ENCODE measurements at regions of chr2 and their contacts with region 1.

Region 1: DNA sequence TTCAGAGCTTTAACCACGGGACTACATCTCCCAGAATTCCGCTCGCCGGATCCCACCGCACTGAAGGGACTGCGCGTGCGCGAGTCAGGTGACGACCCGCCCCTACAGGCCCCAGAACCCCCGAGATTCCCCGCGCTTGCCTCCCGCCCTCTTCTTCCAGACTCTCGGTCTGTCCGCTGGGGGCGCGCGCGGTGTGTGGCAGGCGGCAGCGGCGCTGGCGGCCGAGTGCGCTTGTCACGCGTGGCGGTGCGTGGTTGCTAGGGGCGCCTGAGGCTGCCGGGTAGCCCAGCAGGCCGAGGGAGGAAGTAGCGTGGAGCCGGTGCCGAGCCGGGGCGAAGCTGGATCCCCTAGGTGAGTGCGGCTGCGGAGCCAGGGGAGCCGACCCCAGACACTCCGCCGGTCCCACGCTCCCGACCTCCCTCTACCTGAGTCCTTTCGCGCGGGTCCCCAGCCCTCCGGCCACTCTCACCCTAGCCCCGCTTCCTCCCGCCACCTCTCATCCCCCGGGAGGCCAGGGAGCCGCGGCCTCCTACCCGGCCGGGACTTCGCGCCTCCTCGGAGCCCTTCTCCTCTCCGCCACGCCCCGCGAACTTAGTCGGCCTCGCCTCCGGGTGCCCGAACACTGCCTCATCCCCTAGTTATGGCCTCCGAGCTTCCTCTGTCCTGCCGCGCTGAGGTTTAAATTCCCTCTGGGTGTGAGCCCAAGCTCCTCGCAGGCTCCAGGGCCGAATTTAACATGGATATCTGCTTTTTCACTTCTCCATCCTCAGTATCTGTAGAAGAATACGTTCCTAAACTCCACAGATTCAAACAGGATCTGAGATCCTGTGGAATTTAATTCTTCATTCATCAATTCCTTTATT is at the start of gene TTLL4:
- DNase-seq: peak; percentile 88
- ATAC-seq: peak; percentile 94
- H3K4me3 ChIP-seq: peak within 1 kb of the TSS; percentile 89
- H3K27ac ChIP-seq: peak within 1 kb of the TSS; percentile 77
- H3K4me1 ChIP-seq: peaks cover 7% of the 10 kb centered on the region
- H3K27me3 ChIP-seq: no peaks in the 10 kb centered on the region
- CTCF ChIP-seq: peak; percentile 81 to 95 (median 87)
- EP300 ChIP-seq: no peak
- POLR2A ChIP-seq: peak; percentile 78
- RAD21 ChIP-seq: peak; percentile 81
- polyA plus RNA-seq, gene TTLL4: 16.6 to 18.7 TPM

Region 2: DNA sequence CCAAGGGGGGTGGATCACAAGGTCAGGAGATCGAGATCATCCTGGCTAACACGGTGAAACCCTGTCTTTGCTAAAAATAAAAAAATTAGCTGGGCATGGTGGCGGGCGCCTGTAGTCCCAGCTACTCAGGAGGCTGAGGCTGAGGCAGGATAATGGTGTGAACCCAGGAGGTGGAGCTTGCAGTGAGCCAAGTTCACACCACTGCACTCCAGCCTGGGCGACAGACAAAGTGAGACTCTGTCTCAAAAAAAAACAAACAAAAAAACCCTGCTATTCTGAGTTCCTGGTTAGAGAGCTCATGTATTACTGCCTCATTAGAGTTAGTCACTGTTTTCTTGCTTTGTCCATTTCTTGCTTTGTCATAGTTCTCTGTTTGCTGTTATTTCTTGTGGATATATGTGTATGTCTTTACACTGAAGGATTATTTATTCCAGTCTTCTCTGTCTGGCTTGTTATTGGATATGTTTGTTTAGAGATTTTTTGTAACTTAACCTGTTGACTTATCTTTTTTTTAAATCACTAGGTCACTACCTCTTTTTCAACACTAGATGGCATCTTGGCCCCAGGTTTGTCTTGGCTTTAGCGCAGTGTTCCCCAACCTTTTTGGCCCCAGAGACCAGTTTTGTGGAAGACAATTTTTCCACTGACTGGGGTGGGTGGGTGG is 16.7 kb after region 1 on chr2:
- CTCF ChIA-PET with region 1: interaction called, 15 read pairs
- POLR2A ChIA-PET with region 1: interaction called, 4 read pairs
- RAD21 ChIA-PET with region 1: interaction called, 6 read pairs
- SMC1A ChIA-PET with region 1: interaction called, 9 read pairs
- in situ Hi-C with region 1: no loop called
- intact Hi-C with region 1: no loop called
- DNase-seq: no peak
- ATAC-seq: no peak
- H3K4me3 ChIP-seq: no peak overlapping the region
- H3K27ac ChIP-seq: no peak overlapping the region
- H3K4me1 ChIP-seq: peaks cover 2% of the 10 kb centered on the region
- H3K27me3 ChIP-seq: no peaks in the 10 kb centered on the region
- CTCF ChIP-seq: peak; percentile 26 to 36 (median 32); a peak in 3 of 6 replicates
- EP300 ChIP-seq: no peak
- POLR2A ChIP-seq: no peak
- RAD21 ChIP-seq: peak; percentile 66

Measured in GM12878 (cell line).